ENCODE measurements at regions of chr22 and their contacts with region 1.

Region 1: GRCh38 chr22:41940832-41941765 is 5.9 kb downstream of the CENPM start:
- DNase-seq: peak; percentile 96
- H3K4me3 Mint-ChIP-seq: peak overlapping the region; percentile 86
- H3K27ac Mint-ChIP-seq: peak overlapping the region; percentile 100
- H3K4me1 Mint-ChIP-seq: peaks cover 51% of the 10 kb centered on the region
- H3K27me3 Mint-ChIP-seq: peaks cover 2% of the 10 kb centered on the region

Region 2: DNA sequence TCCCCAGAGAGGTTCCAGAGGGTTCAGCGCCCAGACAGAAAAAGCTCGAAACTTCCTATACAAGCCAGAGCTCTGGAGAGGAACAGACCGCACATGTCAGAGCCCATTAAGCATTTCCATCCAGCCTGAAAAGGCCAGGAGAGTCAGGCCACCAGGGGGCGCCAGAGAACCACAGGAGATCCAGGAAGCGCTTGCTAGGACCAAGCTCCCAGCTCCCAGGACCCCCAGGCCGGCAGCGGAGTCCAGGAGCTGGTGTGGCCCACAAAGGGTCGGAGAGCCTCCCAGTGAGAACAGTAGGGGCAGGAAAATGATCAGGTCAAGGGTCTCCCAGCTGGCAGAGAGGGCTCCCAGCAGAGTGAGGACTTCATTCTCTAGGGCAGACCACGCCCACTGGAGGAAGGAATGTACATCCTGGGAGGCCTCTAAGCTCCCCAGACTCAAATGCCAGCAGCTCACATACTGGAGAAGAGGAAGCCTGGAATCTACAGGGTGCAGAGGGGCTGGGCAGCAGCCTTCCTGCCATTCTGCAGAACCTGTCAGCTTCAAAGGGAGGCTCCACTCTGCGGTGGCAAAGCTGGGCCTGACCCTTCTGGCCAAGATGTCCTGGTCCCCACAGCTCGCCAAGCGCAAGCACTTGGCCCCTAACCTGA is 243.8 kb before region 1 on chr22:
- intact Hi-C with region 1: loop called (anchors 1 kb)
- DNase-seq: peak; percentile 97
- H3K4me3 Mint-ChIP-seq: peak overlapping the region; percentile 34
- H3K27ac Mint-ChIP-seq: peak overlapping the region; percentile 70
- H3K4me1 Mint-ChIP-seq: peaks cover 15% of the 10 kb centered on the region
- H3K27me3 Mint-ChIP-seq: peaks cover 2% of the 10 kb centered on the region

Region 3: GRCh38 chr22:41780746-41781505 is 160.2 kb before region 1 on chr22:
- intact Hi-C with region 1: loop called (anchors 1 kb)
- DNase-seq: peak; percentile 97
- H3K4me3 Mint-ChIP-seq: peak overlapping the region; percentile 83
- H3K27ac Mint-ChIP-seq: peak overlapping the region; percentile 97
- H3K4me1 Mint-ChIP-seq: peaks cover 36% of the 10 kb centered on the region
- H3K27me3 Mint-ChIP-seq: no peaks in the 10 kb centered on the region

Region 4: DNA sequence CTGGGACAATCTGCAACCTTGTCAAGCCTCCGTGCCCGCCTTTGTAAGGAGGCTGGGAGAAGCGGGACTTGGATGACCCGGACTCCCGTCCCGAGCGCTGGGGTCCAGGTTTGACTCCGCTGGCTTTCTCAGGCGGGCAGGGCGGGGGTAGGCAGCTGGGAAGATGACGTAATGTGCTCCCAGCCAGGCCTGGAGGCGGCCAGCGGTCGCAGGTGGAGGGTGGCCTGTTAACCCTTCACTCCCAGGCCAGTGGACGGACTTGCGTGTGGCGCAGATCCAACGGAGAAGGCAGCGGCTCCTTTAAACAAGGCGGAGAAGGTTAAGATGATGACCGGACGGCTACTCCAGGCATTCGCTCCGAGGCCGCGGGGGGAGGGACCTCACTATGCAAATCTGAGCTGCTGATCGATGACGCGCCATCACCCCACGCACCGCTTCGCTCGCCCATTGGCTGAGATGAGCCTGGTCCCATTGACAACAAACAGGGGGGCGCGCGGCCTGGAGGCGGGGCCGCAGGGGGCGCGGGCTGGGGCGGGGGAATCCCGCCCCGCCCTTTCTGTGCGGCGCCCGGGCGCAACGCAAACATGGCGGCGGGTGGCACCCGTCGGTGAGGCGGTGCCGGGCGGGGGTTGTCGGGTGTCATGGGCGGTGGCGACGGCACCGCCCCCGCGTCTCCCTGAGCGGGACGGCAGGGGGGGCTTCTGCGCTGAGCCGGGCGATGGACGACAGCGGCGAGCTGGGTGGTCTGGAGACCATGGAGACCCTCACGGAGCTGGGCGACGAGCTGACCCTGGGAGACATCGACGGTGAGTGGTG is 108.3 kb before region 1 on chr22 and contains the start of gene SREBF2:
- intact Hi-C with region 1: loop called (anchors 1 kb)
- DNase-seq: peak; percentile 99
- H3K4me3 Mint-ChIP-seq: peak within 1 kb of the TSS; percentile 99
- H3K27ac Mint-ChIP-seq: peak within 1 kb of the TSS; percentile 99
- H3K4me1 Mint-ChIP-seq: peaks cover 51% of the 10 kb centered on the region
- H3K27me3 Mint-ChIP-seq: peaks cover 2% of the 10 kb centered on the region
- total RNA-seq, gene SREBF2: 209 and 218 TPM in 2 replicates

Region 5: GRCh38 chr22:41873391-41873790 is 67.7 kb before region 1 on chr22:
- intact Hi-C with region 1: loop called (anchors 1 kb)
- DNase-seq: peak; percentile 71
- H3K4me3 Mint-ChIP-seq: peak overlapping the region; percentile 75
- H3K27ac Mint-ChIP-seq: peak overlapping the region; percentile 96
- H3K4me1 Mint-ChIP-seq: peaks cover 42% of the 10 kb centered on the region
- H3K27me3 Mint-ChIP-seq: no peaks in the 10 kb centered on the region

Region 6: GRCh38 chr22:41925655-41926460 is 15.2 kb before region 1 on chr22:
- intact Hi-C with region 1: loop called (anchors 2 kb)
- DNase-seq: peak; percentile 95
- H3K4me3 Mint-ChIP-seq: peak overlapping the region; percentile 84
- H3K27ac Mint-ChIP-seq: peak overlapping the region; percentile 57
- H3K4me1 Mint-ChIP-seq: peaks cover 18% of the 10 kb centered on the region
- H3K27me3 Mint-ChIP-seq: peaks cover 20% of the 10 kb centered on the region

Region 7: GRCh38 chr22:43377896-43378704 is 1437.0 kb after region 1 on chr22:
- intact Hi-C with region 1: no loop called
- DNase-seq: peak; percentile 61
- H3K4me3 Mint-ChIP-seq: no peak overlapping the region
- H3K27ac Mint-ChIP-seq: no peak overlapping the region
- H3K4me1 Mint-ChIP-seq: peaks cover 17% of the 10 kb centered on the region
- H3K27me3 Mint-ChIP-seq: peaks cover 59% of the 10 kb centered on the region

Measured in activated CD4-positive, alpha-beta T cell treated with anti-CD3 and anti-CD28 coated beads, Interleukin-2, amount 10 ng/mL, durations not matched to agents 24 days and 14 days (primary cell).